ENCODE measurements at regions of chr21 and their contacts with region 1.

Region 1: DNA sequence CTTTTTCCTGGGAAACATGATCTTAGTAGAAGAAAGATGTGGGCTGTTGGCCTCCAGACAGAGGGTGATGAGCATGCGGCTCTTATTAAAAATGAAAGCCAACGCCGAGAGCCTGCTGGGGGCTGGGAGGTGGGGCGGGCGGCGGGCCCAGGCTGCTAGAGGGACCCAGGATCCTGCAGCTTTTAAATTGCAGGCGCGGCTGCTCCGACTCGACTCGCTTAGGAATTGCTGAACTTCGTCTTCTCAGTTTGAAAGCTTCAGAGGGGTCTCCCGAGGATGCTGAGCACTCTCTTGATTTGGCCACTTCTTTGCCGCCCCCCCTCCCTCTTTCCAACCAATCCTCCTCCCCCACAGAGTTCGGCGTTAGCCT is 1.2 kb downstream of the AGPAT3 start:
- DNase-seq: peak; percentile 80
- H3K4me3 Mint-ChIP-seq: peak overlapping the region; percentile 80
- H3K27ac Mint-ChIP-seq: peak overlapping the region; percentile 90
- H3K4me1 Mint-ChIP-seq: peaks cover 43% of the 10 kb centered on the region
- H3K27me3 Mint-ChIP-seq: no peaks in the 10 kb centered on the region

Region 2: GRCh38 chr21:43718872-43719747 is 147.1 kb before region 1 on chr21 and contains the start of gene PDXK:
- CTCF ChIA-PET with region 1: no interaction called
- POLR2A ChIA-PET with region 1: no interaction called
- intact Hi-C with region 1: loop called (anchors 10 kb)
- DNase-seq: peak; percentile 83
- H3K4me3 Mint-ChIP-seq: peak within 1 kb of the TSS; percentile 86
- H3K27ac Mint-ChIP-seq: peak within 1 kb of the TSS; percentile 71
- H3K4me1 Mint-ChIP-seq: peaks cover 20% of the 10 kb centered on the region
- H3K27me3 Mint-ChIP-seq: no peaks in the 10 kb centered on the region
- total RNA-seq, gene PDXK: 126 to 131 TPM

Region 3: GRCh38 chr21:43884012-43884860 is 18.0 kb after region 1 on chr21:
- CTCF ChIA-PET with region 1: interaction called, 3 read pairs
- POLR2A ChIA-PET with region 1: interaction called, 4 read pairs
- intact Hi-C with region 1: loop called (anchors 2 kb)
- DNase-seq: peak; percentile 52
- H3K4me3 Mint-ChIP-seq: no peak overlapping the region
- H3K27ac Mint-ChIP-seq: peak overlapping the region; percentile 23
- H3K4me1 Mint-ChIP-seq: peaks cover 74% of the 10 kb centered on the region
- H3K27me3 Mint-ChIP-seq: no peaks in the 10 kb centered on the region

Region 4: GRCh38 chr21:43916691-43917514 is 50.7 kb after region 1 on chr21:
- CTCF ChIA-PET with region 1: interaction called, 9 read pairs
- POLR2A ChIA-PET with region 1: interaction called, 3 read pairs
- intact Hi-C with region 1: loop called (anchors 2 kb)
- DNase-seq: peak; percentile 76
- H3K4me3 Mint-ChIP-seq: peak overlapping the region; percentile 68
- H3K27ac Mint-ChIP-seq: peak overlapping the region; percentile 76
- H3K4me1 Mint-ChIP-seq: peaks cover 52% of the 10 kb centered on the region
- H3K27me3 Mint-ChIP-seq: no peaks in the 10 kb centered on the region

Measured in activated CD4-positive, alpha-beta memory T cell treated with anti-CD3 and anti-CD28 coated beads for 36 hours (primary cell).